ENCODE measurements at regions of chr10 and their contacts with region 1.

Region 1: GRCh38 chr10:59830601-59831259 is 75.6 kb downstream of the CCDC6 start:
- H3K4me3 ChIP-seq: no peak overlapping the region
- H3K27ac ChIP-seq: no peak overlapping the region
- H3K4me1 ChIP-seq: peaks cover 3% of the 10 kb centered on the region; the same call in 1 of the 2 replicates
- CTCF ChIP-seq: peak; percentile 25; the same call in 1 of the 2 replicates

Region 2: DNA sequence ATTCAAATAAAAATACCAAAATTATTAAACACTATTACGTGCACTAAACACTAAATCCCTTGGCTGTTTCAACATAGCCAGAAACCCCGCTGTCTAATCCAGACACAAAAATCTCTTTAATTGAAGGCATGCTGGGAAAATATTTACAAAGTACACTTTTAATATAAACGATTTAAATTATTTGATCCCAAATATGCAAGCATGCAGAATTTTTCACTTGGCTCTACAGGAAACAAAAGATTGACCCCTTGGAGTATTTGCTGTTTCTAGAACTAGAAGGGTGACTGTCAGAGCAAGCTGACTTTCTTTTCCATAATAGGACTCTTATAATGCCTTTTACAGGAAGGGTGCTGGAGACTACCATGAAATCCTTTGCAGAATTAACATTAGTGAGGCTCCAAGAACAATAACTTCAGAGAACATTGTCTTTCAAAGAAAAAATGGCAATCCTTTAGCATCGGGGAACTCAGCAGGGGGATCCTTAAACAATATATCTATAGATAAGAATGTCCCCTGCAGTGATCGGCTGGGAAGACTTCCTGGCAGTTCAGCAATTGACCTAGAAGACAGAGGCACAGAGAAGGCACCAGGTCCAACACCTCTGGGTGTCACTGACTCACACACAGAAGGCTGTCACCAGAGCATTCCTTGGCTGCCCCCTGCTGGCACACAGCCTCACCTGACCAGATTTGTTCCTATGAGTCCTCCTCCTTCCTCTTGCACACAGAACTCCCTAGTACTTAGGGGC is 21.7 kb before region 1 on chr10:
- CTCF ChIA-PET with region 1: interaction called, 12 read pairs
- POLR2A ChIA-PET with region 1: no interaction called
- H3K4me3 ChIP-seq: no peak overlapping the region
- H3K27ac ChIP-seq: no peak overlapping the region
- H3K4me1 ChIP-seq: no peaks in the 10 kb centered on the region
- CTCF ChIP-seq: peak; percentile 73

Region 3: GRCh38 chr10:59817773-59818172 is 13.0 kb before region 1 on chr10:
- CTCF ChIA-PET with region 1: interaction called, 26 read pairs
- POLR2A ChIA-PET with region 1: no interaction called
- H3K4me3 ChIP-seq: no peak overlapping the region
- H3K27ac ChIP-seq: no peak overlapping the region
- H3K4me1 ChIP-seq: no peaks in the 10 kb centered on the region
- CTCF ChIP-seq: no peak

Region 4: DNA sequence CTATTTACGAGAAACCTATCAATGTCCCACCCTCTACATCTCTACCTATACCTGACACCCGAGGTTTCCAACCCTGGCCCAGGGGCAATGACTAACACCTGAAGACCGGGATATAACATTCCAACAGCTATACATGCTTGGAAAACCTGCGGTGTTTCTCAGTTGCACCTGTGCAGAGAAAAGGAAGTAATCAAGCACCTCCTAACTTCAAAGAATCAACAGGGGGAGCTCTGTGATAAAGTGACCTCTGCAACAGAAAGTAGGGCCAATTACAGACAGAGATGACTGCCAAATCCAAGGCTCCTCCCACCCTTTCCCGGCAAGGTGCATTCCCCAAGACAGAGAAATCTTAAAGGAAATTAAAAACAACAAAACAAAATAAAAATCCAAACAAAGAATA is 34.4 kb after region 1 on chr10:
- CTCF ChIA-PET with region 1: interaction called, 11 read pairs
- POLR2A ChIA-PET with region 1: no interaction called
- H3K4me3 ChIP-seq: no peak overlapping the region
- H3K27ac ChIP-seq: no peak overlapping the region
- H3K4me1 ChIP-seq: peaks cover 12% of the 10 kb centered on the region; the same call in 1 of the 2 replicates
- CTCF ChIP-seq: no peak

Measured in HEK293 (cell line).